GM10248 (cell line): ENCODE measurements at regions of chr19 and their contacts with region 1.

Region 1: GRCh38 chr19:8505680-8506401 is 3.4 kb upstream of the PRAM1 start:
- DNase-seq: peak; percentile 84
- CTCF ChIP-seq: peak; percentile 87

Region 2: DNA sequence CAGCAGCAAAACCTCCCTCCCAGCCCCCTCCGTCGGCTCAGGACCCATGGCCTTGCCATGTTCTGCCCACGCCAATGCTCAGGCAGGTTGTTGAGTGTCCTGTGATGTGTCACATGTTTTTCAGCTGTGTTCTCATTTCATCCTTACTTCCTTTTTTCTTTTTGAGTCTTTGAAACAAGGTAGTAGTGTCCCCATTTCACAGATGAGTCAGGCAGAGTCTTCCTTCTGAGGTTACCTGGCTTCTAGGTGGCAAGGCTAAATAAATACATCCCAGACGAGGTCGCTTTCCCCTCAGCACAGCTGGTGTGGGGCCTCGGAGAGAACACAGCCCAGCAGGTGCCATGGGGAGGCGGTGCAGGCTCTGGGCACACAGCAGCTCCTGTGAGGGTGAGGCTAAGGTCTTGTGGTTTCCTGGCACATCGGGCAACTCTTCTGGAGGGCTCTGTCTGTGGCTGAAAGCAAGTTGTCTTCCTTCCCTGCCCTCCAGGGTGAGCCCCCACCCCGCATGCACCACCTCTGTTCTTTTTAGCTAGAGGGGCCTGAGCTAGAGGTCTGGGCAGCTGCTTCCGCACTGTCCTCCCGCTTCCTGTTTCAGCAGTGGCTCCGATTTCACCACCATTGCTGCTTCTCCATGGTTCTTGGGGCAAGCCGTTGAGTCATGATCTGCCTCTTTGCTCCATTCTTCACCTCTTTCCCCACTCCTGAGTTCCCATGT is 18.5 kb before region 1 on chr19:
- CTCF ChIA-PET with region 1: interaction called, 13 read pairs
- POLR2A ChIA-PET with region 1: no interaction called
- DNase-seq: peak; percentile 46
- CTCF ChIP-seq: no peak

Region 3: GRCh38 chr19:8494158-8494557 is 11.7 kb before region 1 on chr19:
- CTCF ChIA-PET with region 1: interaction called, 20 read pairs
- POLR2A ChIA-PET with region 1: interaction called, 6 read pairs
- DNase-seq: no peak
- CTCF ChIP-seq: no peak

Region 4: DNA sequence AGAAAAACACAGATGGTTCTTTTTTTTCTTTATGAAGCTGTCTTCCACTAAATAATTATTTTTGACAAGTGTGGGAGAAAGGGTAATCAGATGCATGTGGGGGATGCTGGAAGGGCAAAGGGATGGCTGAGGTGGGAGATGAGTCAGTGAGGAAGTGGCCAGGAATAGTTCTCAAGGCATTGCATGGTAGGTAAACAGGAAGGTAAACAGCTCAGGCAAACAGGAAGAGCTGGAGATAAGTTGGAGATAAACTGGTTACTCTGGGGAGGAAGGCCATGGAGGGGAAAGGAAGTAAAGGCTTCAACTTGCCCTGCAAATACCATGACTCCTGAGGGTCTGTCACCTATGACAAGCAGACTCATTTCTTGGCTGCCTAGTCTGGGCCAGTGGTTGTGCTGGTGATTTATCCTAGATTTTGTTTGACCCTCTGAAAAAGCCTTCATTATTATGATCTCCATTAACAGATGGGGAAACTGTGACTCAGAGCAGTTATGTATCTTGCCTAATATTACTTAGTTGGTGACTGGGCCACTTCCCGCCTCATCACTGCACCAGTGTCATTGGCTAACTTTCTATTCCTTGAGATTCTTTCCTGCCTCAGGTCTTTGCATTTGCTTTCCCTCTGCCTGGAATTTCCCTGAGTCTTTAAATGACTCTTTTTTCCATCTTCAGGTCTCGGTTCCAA is 175.6 kb after region 1 on chr19:
- CTCF ChIA-PET with region 1: no interaction called
- POLR2A ChIA-PET with region 1: no interaction called
- DNase-seq: no peak
- CTCF ChIP-seq: no peak

Region 5: DNA sequence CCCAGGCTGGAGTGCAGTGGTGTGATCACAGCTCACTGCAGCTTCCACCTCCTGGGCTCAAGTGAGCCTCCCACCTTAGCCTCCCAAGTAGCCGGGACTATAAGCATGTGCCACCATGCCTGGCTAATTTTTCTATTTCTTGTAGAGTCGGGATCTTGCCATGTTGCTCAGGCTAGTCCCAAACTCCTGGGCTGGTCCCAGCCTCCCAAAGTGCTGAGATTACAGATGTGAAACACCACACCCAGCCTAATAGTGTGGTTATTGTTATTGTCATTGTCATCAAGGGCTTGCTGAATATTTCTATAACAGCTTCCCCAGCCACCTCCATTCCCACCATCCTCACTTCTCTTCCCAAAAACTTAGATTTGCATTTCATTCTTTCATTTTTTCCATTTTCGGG is 218.4 kb after region 1 on chr19:
- CTCF ChIA-PET with region 1: no interaction called
- POLR2A ChIA-PET with region 1: no interaction called
- DNase-seq: no peak
- CTCF ChIP-seq: no peak